MCF 10A (cell line): ENCODE measurements at regions of chr3 and their contacts with region 1.

Region 1: GRCh38 chr3:184777336-184778004 is 34.5 kb upstream of the VPS8 start:
- DNase-seq: peak; percentile 87
- H3K4me3 Mint-ChIP-seq: no peak overlapping the region
- H3K27ac Mint-ChIP-seq: no peak overlapping the region
- H3K4me1 Mint-ChIP-seq: no peaks in the 10 kb centered on the region
- H3K27me3 Mint-ChIP-seq: no peaks in the 10 kb centered on the region
- CTCF ChIP-seq: peak; percentile 80

Region 2: GRCh38 chr3:184568924-184569829 is 208.3 kb before region 1 on chr3:
- CTCF ChIA-PET with region 1: interaction called, 33 read pairs
- POLR2A ChIA-PET with region 1: interaction called, 6 read pairs
- intact Hi-C with region 1: no loop called
- DNase-seq: peak; percentile 78
- H3K4me3 Mint-ChIP-seq: peak overlapping the region; percentile 73
- H3K27ac Mint-ChIP-seq: no peak overlapping the region
- H3K4me1 Mint-ChIP-seq: peaks cover 32% of the 10 kb centered on the region
- H3K27me3 Mint-ChIP-seq: no peaks in the 10 kb centered on the region
- CTCF ChIP-seq: no peak

Region 3: DNA sequence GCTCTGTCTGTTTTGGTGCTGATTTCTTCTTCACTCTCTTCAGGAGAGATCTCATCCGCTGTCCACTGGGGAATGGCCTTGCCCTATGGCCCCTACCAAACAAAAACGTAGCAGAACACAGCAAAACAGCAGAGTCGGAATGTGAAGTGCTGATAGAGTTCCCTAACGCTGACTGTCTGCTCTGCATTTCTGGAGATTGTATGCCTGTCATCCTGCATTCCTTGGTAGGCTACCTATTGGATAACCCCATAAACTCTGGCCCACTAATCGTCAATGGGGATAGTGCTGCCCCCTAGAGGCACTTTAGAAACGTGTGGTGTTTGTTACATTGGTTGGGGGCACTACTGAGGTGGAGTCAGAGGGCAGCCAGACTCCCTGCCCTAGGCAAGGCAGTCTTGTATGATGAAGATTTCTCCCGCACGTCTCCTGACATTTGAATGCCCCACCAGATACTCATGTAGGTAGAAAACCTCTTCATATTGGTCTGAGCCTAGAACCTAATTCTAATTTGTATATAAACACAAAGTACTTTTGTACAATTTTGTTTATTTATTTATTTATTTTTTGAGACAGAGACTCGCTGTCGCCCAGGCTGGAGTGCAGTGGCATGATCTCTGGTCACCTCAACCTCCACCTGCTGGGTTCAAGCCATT is 50.0 kb before region 1 on chr3:
- CTCF ChIA-PET with region 1: interaction called, 12 read pairs
- POLR2A ChIA-PET with region 1: no interaction called
- intact Hi-C with region 1: loop called (anchors 1 kb)
- DNase-seq: peak; percentile 90
- H3K4me3 Mint-ChIP-seq: no peak overlapping the region
- H3K27ac Mint-ChIP-seq: no peak overlapping the region
- H3K4me1 Mint-ChIP-seq: peaks cover 6% of the 10 kb centered on the region
- H3K27me3 Mint-ChIP-seq: no peaks in the 10 kb centered on the region
- CTCF ChIP-seq: peak; percentile 50

Region 4: DNA sequence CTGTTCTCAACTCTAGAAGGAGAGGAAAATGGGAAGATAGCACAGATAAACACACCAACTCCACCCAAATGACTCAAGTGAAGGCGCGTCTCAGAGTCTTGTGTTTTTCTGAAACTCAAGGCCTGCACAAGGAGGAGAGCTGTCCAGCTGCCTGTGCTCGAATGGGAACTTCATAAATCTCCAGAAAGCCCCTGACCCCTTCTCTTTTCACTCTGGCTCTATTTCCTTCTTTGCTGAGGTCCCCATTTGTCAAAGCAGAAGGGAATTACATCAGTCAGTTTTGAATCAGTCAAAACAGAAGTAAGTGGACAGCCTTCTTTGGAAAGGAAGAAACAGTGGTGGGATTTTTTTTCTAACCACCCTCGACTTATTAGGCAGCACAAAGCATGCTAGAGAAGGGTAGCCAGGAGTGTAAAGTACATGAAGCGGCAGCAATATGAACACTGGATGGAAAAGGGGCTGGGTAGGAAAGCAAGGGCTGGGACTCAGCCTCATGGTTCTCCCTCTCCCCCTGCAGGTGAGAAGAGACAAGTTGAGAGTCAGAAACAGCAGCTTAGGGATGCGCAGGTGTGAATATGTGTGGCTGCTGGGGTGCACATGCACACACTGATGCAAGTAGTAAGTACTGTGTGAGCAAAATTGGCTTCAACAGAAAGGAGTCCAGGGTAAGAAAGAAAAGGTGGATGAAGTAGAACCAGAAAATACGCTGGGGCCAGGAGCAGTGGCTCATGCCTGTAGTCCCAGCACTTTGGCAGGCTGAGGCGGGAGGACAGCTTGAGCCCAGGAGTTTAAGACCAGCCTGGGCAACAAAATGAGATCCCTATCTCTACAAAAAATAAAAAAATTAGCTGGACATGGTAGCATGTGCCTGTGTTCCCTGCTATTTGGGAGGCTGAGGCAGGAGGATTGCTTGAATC is 29.0 kb before region 1 on chr3:
- CTCF ChIA-PET with region 1: interaction called, 24 read pairs
- POLR2A ChIA-PET with region 1: interaction called, 5 read pairs
- intact Hi-C with region 1: loop called (anchors 2 kb)
- DNase-seq: peak; percentile 73
- H3K4me3 Mint-ChIP-seq: no peak overlapping the region
- H3K27ac Mint-ChIP-seq: no peak overlapping the region
- H3K4me1 Mint-ChIP-seq: peaks cover 18% of the 10 kb centered on the region
- H3K27me3 Mint-ChIP-seq: no peaks in the 10 kb centered on the region
- CTCF ChIP-seq: peak; percentile 60

Region 5: GRCh38 chr3:184788751-184789150 is 11.3 kb after region 1 on chr3:
- CTCF ChIA-PET with region 1: interaction called, 11 read pairs
- POLR2A ChIA-PET with region 1: no interaction called
- intact Hi-C with region 1: no loop called
- DNase-seq: peak; percentile 67
- H3K4me3 Mint-ChIP-seq: no peak overlapping the region
- H3K27ac Mint-ChIP-seq: no peak overlapping the region
- H3K4me1 Mint-ChIP-seq: no peaks in the 10 kb centered on the region
- H3K27me3 Mint-ChIP-seq: no peaks in the 10 kb centered on the region
- CTCF ChIP-seq: no peak

Region 6: GRCh38 chr3:184808021-184808420 is 30.6 kb after region 1 on chr3:
- CTCF ChIA-PET with region 1: interaction called, 32 read pairs
- POLR2A ChIA-PET with region 1: interaction called, 4 read pairs
- intact Hi-C with region 1: loop called (anchors 1 kb)
- DNase-seq: no peak
- H3K4me3 Mint-ChIP-seq: no peak overlapping the region
- H3K27ac Mint-ChIP-seq: no peak overlapping the region
- H3K4me1 Mint-ChIP-seq: peaks cover 11% of the 10 kb centered on the region
- H3K27me3 Mint-ChIP-seq: no peaks in the 10 kb centered on the region
- CTCF ChIP-seq: peak; percentile 35